Panc1 (cell line): ENCODE measurements at regions of chr6 and their contacts with region 1.

Region 1: GRCh38 chr6:89352278-89353117 is at the start of gene UBE2J1:
- DNase-seq: no peak
- ATAC-seq: peak; percentile 98
- H3K4me3 ChIP-seq: peak within 1 kb of the TSS; percentile 73 to 96
- H3K27ac ChIP-seq: peak within 1 kb of the TSS; percentile 86
- H3K4me1 ChIP-seq: peaks cover 11% of the 10 kb centered on the region
- H3K27me3 ChIP-seq: no peaks in the 10 kb centered on the region
- CTCF ChIP-seq: no peak
- total RNA-seq, gene UBE2J1: 30.5 TPM

Region 2: DNA sequence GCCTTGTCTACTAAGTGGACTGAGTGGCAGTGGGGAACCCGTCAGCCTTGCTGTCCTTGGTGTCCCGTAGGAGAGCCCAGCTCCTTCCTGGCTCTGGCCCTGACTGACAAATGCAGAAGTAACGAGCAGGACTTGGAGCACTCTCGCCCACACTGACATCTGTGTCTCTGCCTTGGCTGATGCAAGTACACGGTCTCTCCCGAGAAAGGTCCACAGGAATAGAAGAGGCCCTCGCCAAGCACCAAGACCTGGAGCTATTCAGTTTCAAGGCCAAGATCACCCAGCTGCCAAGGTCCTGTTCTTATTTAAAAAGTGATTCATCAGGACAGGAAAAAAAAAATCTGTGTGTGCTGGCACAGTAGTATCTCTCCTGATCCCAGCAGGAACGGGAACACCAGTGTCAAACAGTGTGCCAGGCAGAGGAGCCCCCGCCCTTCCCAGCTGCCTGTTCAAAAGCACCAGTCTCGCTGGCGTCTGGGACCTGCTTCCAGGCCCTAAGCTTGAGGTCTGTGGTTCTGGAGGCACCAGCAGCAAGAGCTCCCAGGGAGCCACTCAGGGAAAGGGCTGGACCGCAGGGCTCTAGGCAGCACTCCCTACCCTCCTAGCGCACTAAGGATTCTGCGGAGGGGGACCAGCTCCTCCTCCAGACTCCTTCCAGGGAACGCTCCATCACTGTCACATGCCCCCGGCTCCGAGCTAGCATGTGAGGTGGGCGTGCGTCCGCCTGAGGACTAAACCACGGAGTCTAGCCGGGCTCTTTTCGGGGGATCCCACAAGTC is 765.9 kb before region 1 on chr6:
- CTCF ChIA-PET with region 1: no interaction called
- POLR2A ChIA-PET with region 1: interaction called, 12 read pairs
- in situ Hi-C with region 1: no loop called
- intact Hi-C with region 1: no loop called
- DNase-seq: no peak
- ATAC-seq: peak; percentile 52; the same call in 1 of the 2 replicates
- H3K4me3 ChIP-seq: no peak overlapping the region
- H3K27ac ChIP-seq: no peak overlapping the region
- H3K4me1 ChIP-seq: no peaks in the 10 kb centered on the region
- H3K27me3 ChIP-seq: peaks cover 20% of the 10 kb centered on the region
- CTCF ChIP-seq: no peak

Region 3: GRCh38 chr6:89242574-89243330 is 109.7 kb before region 1 on chr6:
- CTCF ChIA-PET with region 1: no interaction called
- POLR2A ChIA-PET with region 1: no interaction called
- in situ Hi-C with region 1: no loop called
- intact Hi-C with region 1: no loop called
- DNase-seq: no peak
- ATAC-seq: peak; percentile 80
- H3K4me3 ChIP-seq: no peak overlapping the region
- H3K27ac ChIP-seq: no peak overlapping the region
- H3K4me1 ChIP-seq: no peaks in the 10 kb centered on the region
- H3K27me3 ChIP-seq: peaks cover 13% of the 10 kb centered on the region
- CTCF ChIP-seq: peak; percentile 77

Region 4: GRCh38 chr6:89311853-89312531 is 40.5 kb before region 1 on chr6:
- CTCF ChIA-PET with region 1: interaction called, 4 read pairs
- POLR2A ChIA-PET with region 1: interaction called, 12 read pairs
- in situ Hi-C with region 1: no loop called
- intact Hi-C with region 1: no loop called
- DNase-seq: no peak
- ATAC-seq: peak; percentile 37
- H3K4me3 ChIP-seq: no peak overlapping the region
- H3K27ac ChIP-seq: no peak overlapping the region
- H3K4me1 ChIP-seq: no peaks in the 10 kb centered on the region; the same call in none of the 2 replicates
- H3K27me3 ChIP-seq: no peaks in the 10 kb centered on the region
- CTCF ChIP-seq: peak; percentile 80

Region 5: GRCh38 chr6:89412071-89413005 is 59.8 kb after region 1 on chr6 and contains the start of gene RRAGD:
- CTCF ChIA-PET with region 1: no interaction called
- POLR2A ChIA-PET with region 1: interaction called, 10 read pairs
- in situ Hi-C with region 1: no loop called
- intact Hi-C with region 1: no loop called
- DNase-seq: no peak
- ATAC-seq: peak; percentile 86
- H3K4me3 ChIP-seq: peak within 1 kb of the TSS; percentile 50 to 56
- H3K27ac ChIP-seq: peak within 1 kb of the TSS; percentile 7; the same call in 1 of the 2 replicates
- H3K4me1 ChIP-seq: peaks cover 7% of the 10 kb centered on the region
- H3K27me3 ChIP-seq: no peaks in the 10 kb centered on the region; the same call in 1 of the 2 replicates
- CTCF ChIP-seq: no peak
- total RNA-seq, gene RRAGD: 27.8 TPM